Breast epithelium (tissue), 4 donors: ENCODE measurements at regions of chr21 and their contacts with region 1.

Region 1: GRCh38 chr21:40841524-40842202 is 5.3 kb downstream of the DSCAM start:
- DNase-seq: peak in 1 of 2 donors; percentile 32
- H3K4me3 ChIP-seq: peak overlapping the region in 2 of 3 donors; percentile 45 to 61
- H3K27ac ChIP-seq: no peak overlapping the region
- H3K4me1 ChIP-seq: no peaks in the 10 kb centered on the region
- H3K27me3 ChIP-seq: peaks cover 0 to 44% of the 10 kb centered on the region in 2 donors
- CTCF ChIP-seq: peak in 2 of 3 donors; percentile 29 to 34
- POLR2A ChIP-seq: no peak

Region 2: GRCh38 chr21:39681831-39682230 is 1159.8 kb before region 1 on chr21:
- intact Hi-C with region 1: no loop called
- DNase-seq: no peak
- H3K4me3 ChIP-seq: no peak overlapping the region
- H3K27ac ChIP-seq: peak overlapping the region in 1 of 2 donors; percentile 54
- H3K4me1 ChIP-seq: no peaks in the 10 kb centered on the region
- H3K27me3 ChIP-seq: no peaks in the 10 kb centered on the region
- CTCF ChIP-seq: no peak
- POLR2A ChIP-seq: no peak

Region 3: GRCh38 chr21:40466893-40467501 is 374.7 kb before region 1 on chr21:
- intact Hi-C with region 1: no loop called
- DNase-seq: no peak
- H3K4me3 ChIP-seq: no peak overlapping the region
- H3K27ac ChIP-seq: no peak overlapping the region
- H3K4me1 ChIP-seq: no peaks in the 10 kb centered on the region
- H3K27me3 ChIP-seq: peaks cover 0 to 11% of the 10 kb centered on the region in 2 donors
- CTCF ChIP-seq: peak in 2 of 3 donors; percentile 44 to 48
- POLR2A ChIP-seq: no peak

Region 4: DNA sequence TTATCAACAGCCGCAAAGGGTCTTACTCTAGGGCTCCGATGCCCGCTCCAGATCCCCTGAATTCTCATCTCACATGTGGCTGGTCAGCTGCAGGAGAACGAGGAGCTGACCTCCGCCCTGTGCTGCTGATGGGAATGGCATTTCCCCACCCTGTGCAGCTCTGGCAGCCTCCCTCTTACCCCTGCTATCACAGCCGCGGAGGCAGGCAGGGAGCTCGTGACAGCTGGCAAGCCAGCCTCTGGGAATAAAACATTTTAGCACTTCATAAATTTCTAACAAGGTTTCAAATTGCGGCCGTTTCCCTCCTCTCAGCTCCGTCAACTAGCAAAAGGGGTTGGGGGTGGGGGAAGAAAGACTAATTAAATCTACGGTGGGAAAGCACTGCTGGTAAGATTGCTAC is 75.9 kb before region 1 on chr21:
- intact Hi-C with region 1: no loop called
- DNase-seq: no peak
- H3K4me3 ChIP-seq: no peak overlapping the region
- H3K27ac ChIP-seq: no peak overlapping the region
- H3K4me1 ChIP-seq: no peaks in the 10 kb centered on the region
- H3K27me3 ChIP-seq: no peaks in the 10 kb centered on the region
- CTCF ChIP-seq: no peak
- POLR2A ChIP-seq: no peak

Region 5: GRCh38 chr21:41054018-41054578 is 212.4 kb after region 1 on chr21:
- intact Hi-C with region 1: loop called (anchors 10 kb)
- DNase-seq: no peak
- H3K4me3 ChIP-seq: no peak overlapping the region
- H3K27ac ChIP-seq: no peak overlapping the region
- H3K4me1 ChIP-seq: no peaks in the 10 kb centered on the region
- H3K27me3 ChIP-seq: peaks cover 0 to 5% of the 10 kb centered on the region in 2 donors
- CTCF ChIP-seq: no peak
- POLR2A ChIP-seq: no peak